HCT116 (cell line): ENCODE measurements at regions of chr3 and their contacts with region 1.

Region 1: DNA sequence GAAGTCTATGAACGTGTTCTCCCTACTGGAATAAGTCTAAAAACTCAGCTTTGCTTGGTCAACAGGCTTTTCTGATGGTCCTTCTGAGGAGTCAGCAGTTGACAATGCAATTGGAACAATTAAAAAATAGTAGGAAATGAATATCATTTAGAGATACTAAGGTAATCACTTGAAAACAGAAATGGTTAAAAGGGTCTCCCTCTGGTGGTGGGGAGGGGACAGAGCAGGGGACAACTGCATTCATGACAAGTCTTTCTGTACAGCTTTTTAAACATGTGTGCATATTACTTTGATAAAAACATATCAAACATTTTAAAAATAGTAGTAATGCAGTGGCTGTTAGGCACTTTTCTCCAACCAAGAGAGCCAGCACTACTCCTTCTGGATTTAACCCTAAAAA is 119.9 kb upstream of the FHIT start:
- DNase-seq: peak; percentile 35
- ATAC-seq: peak; percentile 78
- H3K4me3 ChIP-seq: no peak overlapping the region
- H3K27ac ChIP-seq: no peak overlapping the region
- H3K4me1 ChIP-seq: no peaks in the 10 kb centered on the region
- H3K27me3 ChIP-seq: peaks cover 15% of the 10 kb centered on the region
- CTCF ChIP-seq: peak; percentile 25 to 80 (median 79); a peak in 4 of 6 replicates
- POLR2A ChIP-seq: no peak
- RAD21 ChIP-seq: peak; percentile 63

Region 2: DNA sequence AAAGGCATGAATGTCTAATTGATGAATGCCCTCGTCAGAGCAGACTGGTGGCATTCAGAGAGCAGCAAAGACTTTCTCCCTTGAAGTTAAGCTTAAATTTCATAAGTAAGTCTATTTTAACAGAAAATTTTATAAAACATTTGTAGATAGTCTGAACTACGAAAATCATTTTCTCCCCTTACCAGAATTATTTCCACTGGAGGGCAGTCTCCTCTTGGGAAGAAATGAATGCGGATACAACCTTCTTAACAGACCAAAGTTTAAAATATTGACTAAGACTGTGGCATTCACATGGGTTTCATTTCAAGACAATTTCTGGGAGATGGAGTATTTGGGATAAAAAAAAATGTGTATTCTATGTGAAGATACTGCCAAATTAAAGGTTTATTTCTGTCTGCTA is 788.8 kb before region 1 on chr3:
- CTCF ChIA-PET with region 1: no interaction called
- POLR2A ChIA-PET with region 1: no interaction called
- RAD21 ChIA-PET with region 1: no interaction called
- intact Hi-C with region 1: loop called (anchors 5 kb)
- DNase-seq: no peak
- ATAC-seq: no peak
- H3K4me3 ChIP-seq: no peak overlapping the region
- H3K27ac ChIP-seq: no peak overlapping the region
- H3K4me1 ChIP-seq: peaks cover 0 to 6% of the 10 kb centered on the region in 2 experiments; a peak in 2 of 4 replicates
- H3K27me3 ChIP-seq: peaks cover 9% of the 10 kb centered on the region
- CTCF ChIP-seq: peak; percentile 8 to 39 (median 25); a peak in 3 of 6 replicates
- POLR2A ChIP-seq: no peak
- RAD21 ChIP-seq: peak; percentile 50

Region 3: GRCh38 chr3:60755096-60755495 is 616.0 kb before region 1 on chr3:
- CTCF ChIA-PET with region 1: no interaction called
- POLR2A ChIA-PET with region 1: no interaction called
- RAD21 ChIA-PET with region 1: no interaction called
- intact Hi-C with region 1: loop called (anchors 2 kb)
- DNase-seq: no peak
- ATAC-seq: peak; percentile 73
- H3K4me3 ChIP-seq: no peak overlapping the region
- H3K27ac ChIP-seq: no peak overlapping the region
- H3K4me1 ChIP-seq: no peaks in the 10 kb centered on the region
- H3K27me3 ChIP-seq: no peaks in the 10 kb centered on the region
- CTCF ChIP-seq: peak; percentile 7 to 53 (median 44); a peak in 4 of 6 replicates
- POLR2A ChIP-seq: no peak
- RAD21 ChIP-seq: peak; percentile 55

Region 4: DNA sequence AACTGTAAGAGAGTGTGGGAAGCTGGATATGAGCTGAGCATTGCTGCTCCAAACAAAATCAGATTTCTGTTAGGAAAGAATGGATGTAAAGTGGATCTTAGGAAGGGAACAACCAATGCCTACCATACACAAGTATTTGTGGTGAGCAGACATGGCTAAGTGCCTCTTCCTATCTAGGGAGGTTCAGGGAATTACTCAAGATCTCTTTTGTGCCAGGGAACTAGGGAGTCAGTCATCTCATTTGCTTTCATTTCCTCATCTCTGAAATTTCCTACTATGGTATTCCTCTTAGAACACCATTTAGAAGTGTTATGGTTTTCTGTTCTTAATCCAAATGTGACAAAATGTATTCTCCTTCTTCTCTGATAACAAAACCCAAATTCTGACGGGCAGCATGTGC is 516.3 kb before region 1 on chr3:
- CTCF ChIA-PET with region 1: no interaction called
- POLR2A ChIA-PET with region 1: no interaction called
- RAD21 ChIA-PET with region 1: no interaction called
- intact Hi-C with region 1: no loop called
- DNase-seq: no peak
- ATAC-seq: no peak
- H3K4me3 ChIP-seq: no peak overlapping the region
- H3K27ac ChIP-seq: no peak overlapping the region
- H3K4me1 ChIP-seq: no peaks in the 10 kb centered on the region
- H3K27me3 ChIP-seq: no peaks in the 10 kb centered on the region
- CTCF ChIP-seq: no peak
- POLR2A ChIP-seq: no peak
- RAD21 ChIP-seq: no peak

Region 5: DNA sequence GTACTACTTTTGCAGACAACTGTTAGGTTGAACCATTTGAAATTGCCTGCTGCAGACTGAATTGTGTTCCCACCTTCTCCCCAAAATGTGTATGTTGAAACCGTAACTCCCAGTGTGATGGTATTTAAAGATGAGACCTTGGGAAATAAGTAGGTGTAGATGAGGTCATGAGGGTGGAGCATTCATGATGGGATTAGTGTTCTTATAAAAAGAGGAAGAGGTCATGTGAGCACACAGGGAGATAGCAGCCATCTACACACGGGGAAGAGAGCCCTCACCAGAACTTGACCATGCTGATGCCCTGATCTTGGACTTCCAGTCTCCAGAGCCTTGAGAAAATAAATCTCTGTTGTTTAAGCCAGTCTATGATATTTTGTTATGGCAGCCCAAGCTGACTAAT is 102.5 kb before region 1 on chr3:
- CTCF ChIA-PET with region 1: no interaction called
- POLR2A ChIA-PET with region 1: no interaction called
- RAD21 ChIA-PET with region 1: no interaction called
- intact Hi-C with region 1: no loop called
- DNase-seq: no peak
- ATAC-seq: no peak
- H3K4me3 ChIP-seq: no peak overlapping the region
- H3K27ac ChIP-seq: no peak overlapping the region
- H3K4me1 ChIP-seq: no peaks in the 10 kb centered on the region
- H3K27me3 ChIP-seq: peaks cover 1% of the 10 kb centered on the region
- CTCF ChIP-seq: no peak
- POLR2A ChIP-seq: no peak
- RAD21 ChIP-seq: no peak

Region 6: DNA sequence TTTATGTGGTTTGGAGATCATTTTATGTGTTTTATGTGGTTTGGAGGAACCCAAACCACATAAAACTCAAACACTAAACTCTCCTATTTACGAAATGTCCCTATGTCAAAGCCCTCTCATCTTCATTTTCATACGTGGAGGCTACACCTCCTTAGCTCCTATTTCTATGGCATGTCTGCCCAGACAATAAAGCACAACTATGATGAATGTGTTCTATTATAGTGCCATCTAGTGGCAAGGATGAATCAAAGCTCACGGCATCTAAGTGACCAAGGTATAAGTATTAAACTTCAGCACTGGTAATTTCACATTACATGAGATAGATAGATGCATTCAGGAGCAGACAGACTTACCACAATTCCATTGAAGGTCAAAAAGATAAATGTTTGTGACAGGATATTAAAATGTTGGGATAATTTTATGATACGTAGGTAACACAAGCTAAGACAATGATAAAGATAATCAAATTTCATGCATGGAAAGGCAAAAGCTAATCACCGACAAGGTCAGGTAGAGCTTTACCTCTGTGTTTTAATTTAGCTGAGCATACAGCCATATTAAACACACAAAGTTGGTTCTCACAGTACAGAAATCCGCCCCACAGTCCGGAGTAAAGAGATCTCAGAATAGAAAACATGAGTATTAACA is 10.7 kb after region 1 on chr3:
- CTCF ChIA-PET with region 1: interaction called, 19 read pairs
- POLR2A ChIA-PET with region 1: no interaction called
- RAD21 ChIA-PET with region 1: no interaction called
- intact Hi-C with region 1: no loop called
- DNase-seq: peak; percentile 48
- ATAC-seq: peak; percentile 98
- H3K4me3 ChIP-seq: no peak overlapping the region
- H3K27ac ChIP-seq: no peak overlapping the region
- H3K4me1 ChIP-seq: no peaks in the 10 kb centered on the region
- H3K27me3 ChIP-seq: peaks cover 9% of the 10 kb centered on the region; the same call in 1 of the 2 replicates
- CTCF ChIP-seq: peak; percentile 37 to 86 (median 59); a peak in 5 of 6 replicates
- POLR2A ChIP-seq: no peak
- RAD21 ChIP-seq: peak; percentile 67